ENCODE measurements at regions of chr4 and their contacts with region 1.

Region 1: DNA sequence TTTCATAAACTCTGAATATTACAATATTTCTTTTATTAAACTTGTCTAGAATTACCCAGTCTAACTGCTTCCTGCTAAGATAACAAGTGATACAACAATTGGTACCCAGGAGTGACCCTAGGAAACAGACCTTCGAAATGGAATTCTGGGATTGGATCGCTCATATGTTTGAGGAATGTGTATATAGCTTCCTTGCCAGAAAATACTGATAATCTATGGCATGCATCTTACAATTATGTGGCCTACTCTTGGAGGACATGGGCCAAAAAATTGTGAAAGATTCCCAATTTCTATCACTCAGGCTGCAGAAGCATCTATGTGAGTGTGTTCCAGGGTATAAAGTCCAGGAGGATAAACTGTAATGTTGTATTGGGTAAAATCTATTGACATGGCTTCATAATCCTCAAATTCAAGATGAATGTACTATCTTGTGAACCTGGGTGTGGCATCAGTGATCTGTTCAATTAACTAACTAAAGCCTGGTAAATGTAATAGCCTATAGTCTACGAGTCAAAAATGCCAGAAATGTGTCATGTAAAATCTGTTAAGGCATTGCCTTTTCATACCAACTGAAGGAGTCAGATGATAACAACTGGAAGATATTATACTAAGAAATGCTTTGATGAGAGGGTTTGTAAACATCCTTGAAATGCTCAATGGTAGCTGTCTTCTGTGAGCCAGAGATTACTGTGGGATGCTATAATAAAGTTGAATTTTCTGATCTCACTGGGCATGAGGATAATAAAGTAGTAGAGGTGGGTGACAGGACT is 1499.3 kb downstream of the PCDH7 start:
- DNase-seq: no peak

Region 2: GRCh38 chr4:32087211-32087610 is 132.3 kb before region 1 on chr4:
- intact Hi-C with region 1: no loop called
- DNase-seq: no peak

Region 3: GRCh38 chr4:33171873-33172550 is 952.5 kb after region 1 on chr4:
- intact Hi-C with region 1: loop called in 1 of 2 experiments (anchors 5 kb)
- DNase-seq: no peak

Measured in posterior vena cava (tissue), 2 donors.